T-cell (primary cell): ENCODE measurements at regions of chr1 and their contacts with region 1.

Region 1: DNA sequence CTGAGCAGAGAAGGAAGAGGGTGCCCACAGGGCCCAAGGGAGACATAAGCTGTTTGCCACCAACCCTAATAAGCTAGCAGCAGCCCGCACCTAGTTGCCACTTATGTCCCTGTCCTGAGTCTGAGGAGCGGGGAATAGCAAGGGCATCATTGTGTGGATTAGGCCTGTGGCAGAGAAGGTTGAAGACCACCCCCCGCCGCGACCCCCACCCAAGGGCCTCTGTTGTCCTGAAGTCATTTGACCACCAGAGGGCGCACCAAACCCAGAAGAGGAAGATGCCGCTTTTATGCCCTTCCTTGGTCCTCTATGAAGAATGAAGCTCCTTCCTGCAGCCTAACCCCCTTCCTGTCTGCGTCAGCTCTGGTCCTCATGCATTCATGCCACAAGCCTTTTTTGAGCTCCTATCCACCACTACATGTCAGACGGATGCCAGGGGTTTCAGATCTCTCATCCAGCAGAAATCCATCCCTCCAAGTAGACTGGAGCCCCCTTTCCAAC is 16.6 kb downstream of the RHBG start:
- DNase-seq: peak; percentile 52 to 86 (median 69)
- ATAC-seq: peak; percentile 80 to 92 (median 88)
- H3K4me3 ChIP-seq: no peak overlapping the region
- H3K4me3 Mint-ChIP-seq: no peak overlapping the region
- H3K27ac ChIP-seq: no peak overlapping the region
- H3K27ac Mint-ChIP-seq: no peak overlapping the region
- H3K4me1 ChIP-seq: peaks cover 0 to 13% of the 10 kb centered on the region in 2 experiments
- H3K4me1 Mint-ChIP-seq: peaks cover 4 to 10% (median 5%) of the 10 kb centered on the region in 3 donors
- H3K27me3 ChIP-seq: peaks cover 4 to 66% of the 10 kb centered on the region in 2 experiments
- H3K27me3 Mint-ChIP-seq: peaks cover 27 to 43% of the 10 kb centered on the region in 2 donors

Region 2: GRCh38 chr1:156298852-156299357 is 86.7 kb before region 1 on chr1 and contains the start of gene VHLL:
- CTCF ChIA-PET with region 1: no interaction called
- POLR2A ChIA-PET with region 1: no interaction called
- DNase-seq: no peak
- ATAC-seq: no peak
- H3K4me3 ChIP-seq: no peak within 1 kb of the TSS
- H3K4me3 Mint-ChIP-seq: no peak within 1 kb of the TSS
- H3K27ac ChIP-seq: no peak within 1 kb of the TSS
- H3K27ac Mint-ChIP-seq: no peak within 1 kb of the TSS
- H3K4me1 ChIP-seq: peaks cover 8 to 19% of the 10 kb centered on the region in 2 experiments
- H3K4me1 Mint-ChIP-seq: peaks cover 14 to 20% (median 19%) of the 10 kb centered on the region in 3 donors
- H3K27me3 ChIP-seq: no peaks in the 10 kb centered on the region
- H3K27me3 Mint-ChIP-seq: no peaks in the 10 kb centered on the region
- total RNA-seq, gene VHLL: 0.39 to 0.88 TPM in 2 of 5 donors, not detected in the others

Region 3: DNA sequence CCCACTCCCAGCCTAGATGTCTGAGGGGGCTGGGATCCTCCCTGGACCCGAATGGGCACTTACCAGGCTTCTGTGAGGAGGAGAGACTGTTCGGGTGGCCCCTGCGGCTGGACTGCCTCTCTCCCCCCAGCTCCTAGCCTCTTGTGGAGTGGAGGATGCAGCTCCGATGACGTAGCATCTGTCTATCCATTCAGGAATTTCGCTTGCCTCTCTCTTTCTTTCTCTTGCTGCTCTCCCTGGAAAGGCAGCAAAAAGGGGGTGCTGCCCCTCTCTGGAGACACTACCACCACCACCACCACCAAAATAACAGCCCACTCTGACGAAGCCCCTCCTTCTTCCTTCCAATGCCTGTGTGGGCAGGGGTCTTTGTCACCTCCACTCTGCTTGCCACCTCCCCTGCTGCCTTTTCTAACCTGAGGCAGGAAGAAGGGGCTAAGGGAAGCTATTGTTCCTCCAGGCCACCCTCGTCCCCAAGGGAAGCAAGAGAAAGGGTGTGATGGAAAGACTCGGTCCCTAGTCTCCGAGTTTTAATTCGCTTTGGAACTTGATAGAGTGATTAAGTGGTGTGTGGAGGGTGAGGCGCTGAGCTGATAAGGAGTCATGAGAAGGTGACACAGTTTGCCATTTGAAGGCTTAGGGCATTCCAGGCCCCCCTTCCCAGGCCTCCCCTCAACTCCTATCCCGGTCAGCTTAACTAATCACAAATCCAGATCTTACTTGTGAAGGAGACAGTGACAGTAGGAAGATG is 43.9 kb after region 1 on chr1:
- CTCF ChIA-PET with region 1: interaction called, 3 to 23 read pairs
- POLR2A ChIA-PET with region 1: no interaction called
- DNase-seq: no peak
- ATAC-seq: no peak
- H3K4me3 ChIP-seq: no peak overlapping the region
- H3K4me3 Mint-ChIP-seq: no peak overlapping the region
- H3K27ac ChIP-seq: no peak overlapping the region
- H3K27ac Mint-ChIP-seq: peak overlapping the region in 1 of 2 donors; percentile 25
- H3K4me1 ChIP-seq: no peaks in the 10 kb centered on the region
- H3K4me1 Mint-ChIP-seq: no peaks in the 10 kb centered on the region
- H3K27me3 ChIP-seq: peaks cover 33 to 70% of the 10 kb centered on the region in 2 experiments
- H3K27me3 Mint-ChIP-seq: peaks cover 82 to 90% of the 10 kb centered on the region in 2 donors

Region 4: GRCh38 chr1:156445789-156446263 is 60.2 kb after region 1 on chr1:
- CTCF ChIA-PET with region 1: interaction called, 58 to 143 read pairs
- POLR2A ChIA-PET with region 1: interaction called, 7 to 11 read pairs
- DNase-seq: peak; percentile 37 to 87 (median 67)
- ATAC-seq: peak; percentile 80 to 86 (median 84)
- H3K4me3 ChIP-seq: no peak overlapping the region
- H3K4me3 Mint-ChIP-seq: peak overlapping the region in 1 of 3 donors; percentile 4
- H3K27ac ChIP-seq: no peak overlapping the region
- H3K27ac Mint-ChIP-seq: no peak overlapping the region
- H3K4me1 ChIP-seq: peaks cover 2 to 5% of the 10 kb centered on the region in 2 experiments
- H3K4me1 Mint-ChIP-seq: peaks cover 4 to 9% (median 8%) of the 10 kb centered on the region in 3 donors
- H3K27me3 ChIP-seq: peaks cover 24 to 36% of the 10 kb centered on the region in 2 experiments
- H3K27me3 Mint-ChIP-seq: peaks cover 32 to 60% of the 10 kb centered on the region in 2 donors

Region 5: DNA sequence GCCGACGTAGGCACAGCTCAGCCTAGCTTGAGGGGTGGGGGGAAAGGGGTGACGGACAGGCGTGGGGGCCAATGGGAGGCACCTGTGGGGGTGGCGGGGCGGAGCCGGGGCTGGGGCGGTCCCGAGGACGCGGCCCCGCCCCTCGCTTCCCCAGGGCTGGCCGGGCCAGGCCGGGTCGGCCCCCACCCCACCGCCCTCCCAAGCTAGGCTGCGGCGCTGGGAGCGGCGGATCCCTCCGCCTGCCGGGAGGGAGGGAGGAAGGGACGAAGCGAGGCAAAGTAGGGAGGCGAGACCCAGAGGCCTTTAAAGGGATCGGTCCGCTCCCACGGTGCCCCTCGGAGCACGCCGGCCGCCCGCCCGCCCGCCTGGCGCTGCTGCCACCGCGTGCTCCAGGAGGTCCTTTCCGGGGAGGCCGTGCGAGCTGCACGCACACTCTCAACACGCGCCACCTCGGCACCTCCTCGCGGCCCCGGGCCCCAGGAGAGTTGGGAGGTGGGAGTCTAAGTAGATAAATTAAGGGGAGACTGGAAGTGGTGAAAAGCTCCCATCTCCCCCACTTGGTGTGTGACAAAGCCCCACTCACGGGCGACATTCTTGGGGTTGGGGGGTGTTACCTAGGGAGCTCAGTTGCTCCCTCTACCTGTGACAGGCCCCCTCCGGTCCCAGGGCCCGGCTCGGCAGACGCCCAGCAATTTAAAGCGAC is 115.4 kb after region 1 on chr1:
- CTCF ChIA-PET with region 1: interaction called in 1 of 2 experiments, 11 read pairs
- POLR2A ChIA-PET with region 1: no interaction called
- DNase-seq: peak; percentile 85 to 96 (median 91)
- ATAC-seq: peak; percentile 71 to 80 (median 74)
- H3K4me3 ChIP-seq: peak overlapping the region; percentile 87 to 91
- H3K4me3 Mint-ChIP-seq: peak overlapping the region; percentile 82 to 92 (median 90)
- H3K27ac ChIP-seq: peak overlapping the region; percentile 97
- H3K27ac Mint-ChIP-seq: peak overlapping the region; percentile 97 to 99
- H3K4me1 ChIP-seq: peaks cover 54 to 84% of the 10 kb centered on the region in 2 experiments
- H3K4me1 Mint-ChIP-seq: peaks cover 67 to 79% (median 76%) of the 10 kb centered on the region in 3 donors
- H3K27me3 ChIP-seq: no peaks in the 10 kb centered on the region
- H3K27me3 Mint-ChIP-seq: no peaks in the 10 kb centered on the region